CD8-positive, alpha-beta T cell (primary cell): ENCODE measurements at regions of chr6 and their contacts with region 1.

Region 1: GRCh38 chr6:159042003-159042825 is 2.6 kb downstream of the TAGAP start:
- DNase-seq: peak; percentile 59 to 96 (median 74)
- ATAC-seq: peak; percentile 50
- H3K4me3 ChIP-seq: peak overlapping the region; percentile 63 to 90
- H3K4me3 Mint-ChIP-seq: peak overlapping the region; percentile 99
- H3K27ac ChIP-seq: peak overlapping the region; percentile 82 to 92
- H3K27ac Mint-ChIP-seq: peak overlapping the region; percentile 95
- H3K4me1 ChIP-seq: peaks cover 58% of the 10 kb centered on the region
- H3K4me1 Mint-ChIP-seq: peaks cover 69% of the 10 kb centered on the region
- H3K27me3 ChIP-seq: no peaks in the 10 kb centered on the region
- H3K27me3 Mint-ChIP-seq: no peaks in the 10 kb centered on the region
- CTCF ChIP-seq: peak; percentile 92

Region 2: GRCh38 chr6:158644231-158645063 is 397.8 kb before region 1 on chr6 and contains the start of gene DYNLT1:
- CTCF ChIA-PET with region 1: no interaction called
- POLR2A ChIA-PET with region 1: no interaction called
- intact Hi-C with region 1: loop called in 1 of 2 experiments (anchors 5 kb)
- DNase-seq: peak; percentile 77 to 92 (median 85)
- ATAC-seq: peak; percentile 67
- H3K4me3 ChIP-seq: peak within 1 kb of the TSS; percentile 77 to 84
- H3K4me3 Mint-ChIP-seq: peak within 1 kb of the TSS; percentile 97
- H3K27ac ChIP-seq: peak within 1 kb of the TSS; percentile 93 to 94
- H3K27ac Mint-ChIP-seq: peak within 1 kb of the TSS; percentile 96
- H3K4me1 ChIP-seq: peaks cover 49% of the 10 kb centered on the region
- H3K4me1 Mint-ChIP-seq: peaks cover 63% of the 10 kb centered on the region
- H3K27me3 ChIP-seq: no peaks in the 10 kb centered on the region
- H3K27me3 Mint-ChIP-seq: no peaks in the 10 kb centered on the region
- CTCF ChIP-seq: no peak
- total RNA-seq, gene DYNLT1: 109 TPM

Region 3: DNA sequence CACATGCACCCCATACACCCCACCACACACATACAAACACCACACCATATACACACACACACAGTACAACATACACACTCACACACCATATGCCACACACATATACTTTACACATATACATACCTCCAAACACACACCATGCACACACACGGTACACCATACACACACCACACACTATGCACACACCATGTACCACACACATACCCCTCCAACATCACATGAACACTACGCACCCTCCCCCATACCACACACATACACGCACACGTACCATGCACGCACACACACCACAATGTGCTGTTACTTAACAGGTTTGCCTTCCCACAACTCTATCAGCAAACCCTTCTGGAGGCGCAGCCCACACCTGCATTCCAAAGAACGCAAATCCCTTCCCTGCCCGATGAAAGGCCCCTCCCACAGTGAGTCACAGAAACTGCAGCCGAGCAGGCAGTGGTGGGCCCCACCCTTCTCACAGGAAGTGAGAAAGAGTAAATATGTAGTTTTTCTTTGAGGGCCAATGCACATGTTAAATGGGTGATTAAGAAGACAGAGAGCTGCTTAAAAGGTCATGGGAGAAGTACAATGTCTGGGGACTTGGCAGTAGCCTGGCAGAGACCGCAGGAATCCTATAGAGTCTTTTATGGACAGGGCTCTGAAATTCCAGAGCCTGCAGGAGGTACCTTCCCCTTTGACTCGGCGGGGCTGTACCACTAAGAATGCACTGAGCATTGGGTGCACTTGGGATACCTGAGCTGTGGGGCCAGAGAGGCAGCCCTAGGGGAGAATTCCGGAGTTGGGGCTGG is 188.9 kb before region 1 on chr6:
- CTCF ChIA-PET with region 1: no interaction called
- POLR2A ChIA-PET with region 1: no interaction called
- intact Hi-C with region 1: loop called in 1 of 2 experiments (anchors 5 kb)
- DNase-seq: peak; percentile 75 to 95 (median 88)
- ATAC-seq: peak; percentile 74
- H3K4me3 ChIP-seq: peak overlapping the region; percentile 7 to 52
- H3K4me3 Mint-ChIP-seq: no peak overlapping the region
- H3K27ac ChIP-seq: peak overlapping the region; percentile 77 to 98
- H3K27ac Mint-ChIP-seq: no peak overlapping the region
- H3K4me1 ChIP-seq: peaks cover 58% of the 10 kb centered on the region
- H3K4me1 Mint-ChIP-seq: peaks cover 44% of the 10 kb centered on the region
- H3K27me3 ChIP-seq: no peaks in the 10 kb centered on the region
- H3K27me3 Mint-ChIP-seq: no peaks in the 10 kb centered on the region
- CTCF ChIP-seq: no peak

Region 4: DNA sequence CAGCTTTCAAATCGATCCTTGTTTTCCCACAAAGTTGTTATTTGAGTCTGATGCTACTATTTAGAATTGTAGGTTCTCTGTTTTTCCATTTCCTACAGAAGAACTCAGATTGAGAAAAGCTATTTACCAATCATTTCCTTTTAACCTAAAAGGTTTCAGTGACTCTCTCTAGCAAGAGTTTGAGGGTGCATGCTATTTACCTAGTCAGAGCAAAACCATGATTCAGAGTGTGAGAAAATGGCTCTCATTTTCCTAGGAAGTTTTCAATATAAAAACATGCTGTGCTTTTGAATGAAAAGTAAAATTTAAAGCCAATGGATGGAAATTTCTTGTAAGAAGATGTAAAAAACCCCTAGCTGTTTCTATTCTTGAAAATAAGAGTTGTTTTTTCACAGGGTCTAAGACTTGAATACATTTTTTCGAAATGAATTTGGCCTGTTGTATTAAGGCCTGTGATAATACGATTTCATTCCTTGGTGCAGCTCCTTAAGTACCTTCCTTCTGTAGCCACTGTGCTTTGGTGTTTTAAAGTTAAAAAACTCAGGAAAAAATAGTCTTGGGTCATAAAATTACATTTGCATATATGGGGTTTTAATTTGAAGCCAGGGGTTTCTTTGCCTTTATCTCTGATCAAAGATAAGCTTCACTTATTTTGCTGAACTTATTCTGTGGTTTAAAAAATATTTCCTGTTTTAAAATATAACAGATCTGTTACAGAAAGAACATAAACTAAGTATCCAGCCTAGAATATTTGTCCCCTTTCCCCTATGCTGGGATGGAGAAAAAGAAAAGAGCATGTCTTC is 24.3 kb before region 1 on chr6:
- CTCF ChIA-PET with region 1: interaction called, 118 read pairs
- POLR2A ChIA-PET with region 1: interaction called, 9 read pairs
- intact Hi-C with region 1: no loop called
- DNase-seq: no peak
- ATAC-seq: no peak
- H3K4me3 ChIP-seq: no peak overlapping the region
- H3K4me3 Mint-ChIP-seq: peak overlapping the region; percentile 39
- H3K27ac ChIP-seq: peak overlapping the region in 1 of 2 experiments; percentile 51
- H3K27ac Mint-ChIP-seq: peak overlapping the region; percentile 58
- H3K4me1 ChIP-seq: peaks cover 19% of the 10 kb centered on the region
- H3K4me1 Mint-ChIP-seq: peaks cover 45% of the 10 kb centered on the region
- H3K27me3 ChIP-seq: no peaks in the 10 kb centered on the region
- H3K27me3 Mint-ChIP-seq: no peaks in the 10 kb centered on the region
- CTCF ChIP-seq: no peak

Region 5: GRCh38 chr6:159080217-159080976 is 38.2 kb after region 1 on chr6:
- CTCF ChIA-PET with region 1: interaction called, 5 read pairs
- POLR2A ChIA-PET with region 1: interaction called, 4 read pairs
- intact Hi-C with region 1: loop called in 1 of 2 experiments (anchors 1 kb)
- DNase-seq: peak in 1 of 9 experiments; percentile 52
- ATAC-seq: peak; percentile 65
- H3K4me3 ChIP-seq: no peak overlapping the region
- H3K4me3 Mint-ChIP-seq: peak overlapping the region; percentile 37
- H3K27ac ChIP-seq: no peak overlapping the region
- H3K27ac Mint-ChIP-seq: peak overlapping the region; percentile 72
- H3K4me1 ChIP-seq: peaks cover 36% of the 10 kb centered on the region
- H3K4me1 Mint-ChIP-seq: peaks cover 46% of the 10 kb centered on the region
- H3K27me3 ChIP-seq: no peaks in the 10 kb centered on the region
- H3K27me3 Mint-ChIP-seq: no peaks in the 10 kb centered on the region
- CTCF ChIP-seq: no peak

Region 6: DNA sequence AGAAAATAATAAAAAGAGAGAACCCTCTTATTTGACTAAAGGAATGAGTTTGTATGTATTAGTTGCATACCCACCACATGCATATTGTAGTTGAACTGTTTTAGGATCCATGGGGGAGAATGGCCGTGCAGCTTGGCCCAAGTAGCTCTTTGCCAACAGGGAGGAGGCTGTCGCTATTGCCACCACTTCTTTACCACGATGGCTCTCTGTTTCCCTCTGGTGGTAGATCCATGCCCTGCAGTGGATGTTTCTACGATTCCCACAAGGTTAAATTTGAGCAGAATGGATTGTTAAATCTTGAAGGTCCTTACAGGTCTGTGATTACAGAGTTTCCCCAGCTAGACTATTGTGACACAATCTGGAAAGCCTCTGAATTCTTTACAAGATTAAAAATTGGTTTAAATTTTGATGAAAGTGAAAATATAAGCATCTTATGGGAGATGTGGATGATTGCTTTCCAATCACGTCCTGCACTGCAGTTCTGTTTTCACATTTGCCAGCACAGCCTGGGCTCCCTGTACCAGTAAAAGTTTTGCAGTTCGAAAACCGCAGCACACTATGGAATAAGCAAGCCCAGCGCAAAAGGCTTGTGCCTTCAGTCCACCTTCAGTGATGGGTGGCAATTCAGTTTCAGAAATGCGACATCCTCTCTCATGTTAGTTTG is 92.6 kb after region 1 on chr6:
- CTCF ChIA-PET with region 1: interaction called, 33 read pairs
- POLR2A ChIA-PET with region 1: interaction called, 3 read pairs
- intact Hi-C with region 1: loop called in 1 of 2 experiments (anchors 1 kb)
- DNase-seq: peak; percentile 63 to 86 (median 78)
- ATAC-seq: peak; percentile 96
- H3K4me3 ChIP-seq: no peak overlapping the region
- H3K4me3 Mint-ChIP-seq: no peak overlapping the region
- H3K27ac ChIP-seq: no peak overlapping the region
- H3K27ac Mint-ChIP-seq: no peak overlapping the region
- H3K4me1 ChIP-seq: no peaks in the 10 kb centered on the region
- H3K4me1 Mint-ChIP-seq: no peaks in the 10 kb centered on the region
- H3K27me3 ChIP-seq: no peaks in the 10 kb centered on the region
- H3K27me3 Mint-ChIP-seq: no peaks in the 10 kb centered on the region
- CTCF ChIP-seq: peak; percentile 96